Activated CD4-positive, alpha-beta T cell treated with anti-CD3 and anti-CD28 coated beads for 36 hours (primary cell): ENCODE measurements at regions of chr14 and their contacts with region 1.

Region 1: DNA sequence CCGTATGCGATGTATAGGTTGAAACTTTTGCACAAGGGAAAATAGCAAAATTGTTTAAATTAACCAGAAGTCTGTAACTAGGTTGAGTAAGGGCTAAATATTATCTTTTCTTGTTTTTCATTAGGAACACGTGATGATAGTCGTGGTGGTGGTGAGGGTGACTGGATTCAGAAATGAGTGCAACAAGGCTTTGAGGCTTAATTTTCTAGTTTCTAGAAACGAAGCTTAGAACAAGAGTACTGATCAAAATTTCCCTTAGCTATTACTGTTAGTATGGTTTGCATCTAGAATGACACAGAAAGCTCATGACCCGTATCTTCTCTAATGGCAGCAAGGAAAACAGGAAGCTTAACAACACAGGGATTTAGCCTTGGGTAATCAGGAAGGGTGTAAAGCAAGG is 7.0 kb downstream of the SLIRP start:
- DNase-seq: peak; percentile 51
- ATAC-seq: peak; percentile 86
- H3K4me3 Mint-ChIP-seq: no peak overlapping the region
- H3K27ac Mint-ChIP-seq: peak overlapping the region; percentile 94
- H3K4me1 Mint-ChIP-seq: peaks cover 29% of the 10 kb centered on the region
- H3K27me3 Mint-ChIP-seq: no peaks in the 10 kb centered on the region

Region 2: GRCh38 chr14:77738559-77739250 is 23.8 kb after region 1 on chr14:
- CTCF ChIA-PET with region 1: no interaction called
- POLR2A ChIA-PET with region 1: interaction called, 6 read pairs
- intact Hi-C with region 1: loop called in 1 of 2 experiments (anchors 1 kb)
- DNase-seq: peak; percentile 56
- ATAC-seq: peak; percentile 78
- H3K4me3 Mint-ChIP-seq: peak overlapping the region; percentile 30
- H3K27ac Mint-ChIP-seq: peak overlapping the region; percentile 76
- H3K4me1 Mint-ChIP-seq: peaks cover 53% of the 10 kb centered on the region
- H3K27me3 Mint-ChIP-seq: no peaks in the 10 kb centered on the region